Endothelial cell of umbilical vein (primary cell): ENCODE measurements at regions of chr6 and their contacts with region 1.

Region 1: DNA sequence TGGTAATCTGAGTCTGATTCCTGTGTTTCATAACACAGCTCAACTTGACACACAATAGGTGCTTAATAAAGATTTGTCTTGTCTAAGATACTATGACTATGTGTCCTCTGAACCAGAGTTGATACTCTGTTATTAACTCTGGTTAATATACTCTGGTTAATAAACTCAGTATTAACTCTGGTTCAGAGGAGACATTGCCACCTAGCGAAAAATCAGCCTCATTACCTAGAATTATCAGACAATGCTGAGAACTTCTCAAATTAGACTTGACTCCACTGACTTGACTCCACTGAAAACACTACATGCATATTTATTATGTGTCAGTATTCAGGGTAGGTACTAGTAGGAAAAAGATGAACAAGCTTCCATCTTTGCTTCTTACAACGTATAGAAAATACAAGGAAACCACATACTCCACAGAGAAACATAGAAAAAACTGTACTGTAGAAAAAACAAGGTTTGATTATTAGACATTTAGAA is 73.9 kb downstream of the AHI1 start:
- DNase-seq: peak; percentile 62
- H3K4me3 ChIP-seq: no peak overlapping the region
- H3K27ac ChIP-seq: no peak overlapping the region
- H3K4me1 ChIP-seq: peaks cover 11% of the 10 kb centered on the region
- H3K27me3 ChIP-seq: no peaks in the 10 kb centered on the region
- CTCF ChIP-seq: peak; percentile 48 to 51
- POLR2A ChIP-seq: no peak

Region 2: GRCh38 chr6:134657751-134658522 is 765.8 kb before region 1 on chr6:
- CTCF ChIA-PET with region 1: no interaction called
- POLR2A ChIA-PET with region 1: no interaction called
- dilution Hi-C with region 1: no loop called
- intact Hi-C with region 1: loop called (anchors 5 kb)
- DNase-seq: peak; percentile 10
- H3K4me3 ChIP-seq: no peak overlapping the region
- H3K27ac ChIP-seq: no peak overlapping the region
- H3K4me1 ChIP-seq: peaks cover 4% of the 10 kb centered on the region
- H3K27me3 ChIP-seq: no peaks in the 10 kb centered on the region
- CTCF ChIP-seq: no peak
- POLR2A ChIP-seq: no peak

Region 3: GRCh38 chr6:134903448-134903847 is 520.2 kb before region 1 on chr6:
- CTCF ChIA-PET with region 1: no interaction called
- POLR2A ChIA-PET with region 1: interaction called, 11 read pairs
- dilution Hi-C with region 1: no loop called
- intact Hi-C with region 1: no loop called
- DNase-seq: no peak
- H3K4me3 ChIP-seq: no peak overlapping the region
- H3K27ac ChIP-seq: no peak overlapping the region
- H3K4me1 ChIP-seq: no peaks in the 10 kb centered on the region
- H3K27me3 ChIP-seq: no peaks in the 10 kb centered on the region
- CTCF ChIP-seq: no peak
- POLR2A ChIP-seq: no peak